KBM-7 (cell line): ENCODE measurements at regions of chr20 and their contacts with region 1.

Region 1: GRCh38 chr20:41339507-41340326 is 904 bp upstream of the LPIN3 start:
- DNase-seq: peak; percentile 76

Region 2: DNA sequence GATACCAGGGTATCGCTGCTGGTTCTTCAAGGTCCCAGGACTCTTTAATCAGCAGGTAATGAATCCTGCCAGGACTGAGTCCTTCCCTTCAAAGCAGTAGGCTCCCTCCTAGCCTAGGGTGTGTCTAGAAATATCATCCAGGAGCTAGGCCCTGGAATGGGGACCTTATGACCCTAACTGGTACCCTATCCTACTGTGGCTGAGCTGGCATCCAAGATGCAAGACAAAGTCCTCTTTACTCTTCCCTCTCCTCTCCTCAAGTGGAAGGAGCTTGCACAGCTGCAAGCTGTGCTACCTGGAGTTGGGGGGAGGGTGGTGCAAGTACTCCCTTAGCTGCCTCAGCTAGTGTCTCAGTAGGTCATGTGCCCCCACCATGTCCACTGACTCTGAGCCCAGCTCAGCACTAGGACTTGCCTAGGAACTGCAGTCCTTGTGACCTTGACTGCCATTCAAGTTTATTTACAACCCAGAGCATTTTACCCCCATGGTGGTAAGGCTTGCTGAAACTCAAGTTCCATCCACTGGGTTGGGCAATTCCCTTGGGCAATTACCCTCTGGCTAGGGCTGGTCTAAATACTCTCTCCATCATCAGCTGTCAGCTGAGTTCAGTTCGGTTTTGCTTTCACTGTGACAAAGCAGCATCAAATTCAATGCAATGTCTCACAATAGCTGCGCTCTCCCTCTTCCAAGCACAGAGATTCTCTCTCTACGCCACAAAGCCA is 359.4 kb before region 1 on chr20:
- in situ Hi-C with region 1: loop called (anchors 10 kb)
- DNase-seq: no peak

Region 3: DNA sequence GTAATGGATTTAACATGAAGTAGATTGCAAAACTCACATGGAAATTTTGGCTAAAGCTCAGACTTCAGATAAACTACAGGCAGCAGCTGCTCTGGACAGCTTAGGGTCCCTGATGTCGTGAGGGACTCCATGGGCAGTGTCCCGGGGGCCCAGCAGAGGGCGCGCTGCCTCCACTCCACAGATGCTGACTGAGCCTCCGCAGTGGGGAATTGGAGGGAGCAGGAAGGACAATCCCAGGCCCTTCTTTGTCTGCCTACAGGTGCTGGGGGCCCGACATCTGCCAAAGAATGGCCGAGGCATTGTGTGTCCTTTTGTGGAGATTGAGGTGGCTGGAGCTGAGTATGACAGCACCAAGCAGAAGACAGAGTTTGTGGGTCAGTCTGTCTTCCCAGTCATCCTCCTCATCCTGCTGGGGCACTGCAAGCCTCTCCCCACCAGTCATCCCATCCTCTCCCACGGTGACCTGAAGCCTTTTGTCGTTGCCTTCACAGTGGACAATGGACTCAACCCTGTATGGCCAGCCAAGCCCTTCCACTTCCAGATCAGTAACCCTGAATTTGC is 166.5 kb before region 1 on chr20:
- in situ Hi-C with region 1: loop called (anchors 10 kb)
- DNase-seq: peak; percentile 81